ENCODE measurements at regions of chr16 and their contacts with region 1.

Region 1: DNA sequence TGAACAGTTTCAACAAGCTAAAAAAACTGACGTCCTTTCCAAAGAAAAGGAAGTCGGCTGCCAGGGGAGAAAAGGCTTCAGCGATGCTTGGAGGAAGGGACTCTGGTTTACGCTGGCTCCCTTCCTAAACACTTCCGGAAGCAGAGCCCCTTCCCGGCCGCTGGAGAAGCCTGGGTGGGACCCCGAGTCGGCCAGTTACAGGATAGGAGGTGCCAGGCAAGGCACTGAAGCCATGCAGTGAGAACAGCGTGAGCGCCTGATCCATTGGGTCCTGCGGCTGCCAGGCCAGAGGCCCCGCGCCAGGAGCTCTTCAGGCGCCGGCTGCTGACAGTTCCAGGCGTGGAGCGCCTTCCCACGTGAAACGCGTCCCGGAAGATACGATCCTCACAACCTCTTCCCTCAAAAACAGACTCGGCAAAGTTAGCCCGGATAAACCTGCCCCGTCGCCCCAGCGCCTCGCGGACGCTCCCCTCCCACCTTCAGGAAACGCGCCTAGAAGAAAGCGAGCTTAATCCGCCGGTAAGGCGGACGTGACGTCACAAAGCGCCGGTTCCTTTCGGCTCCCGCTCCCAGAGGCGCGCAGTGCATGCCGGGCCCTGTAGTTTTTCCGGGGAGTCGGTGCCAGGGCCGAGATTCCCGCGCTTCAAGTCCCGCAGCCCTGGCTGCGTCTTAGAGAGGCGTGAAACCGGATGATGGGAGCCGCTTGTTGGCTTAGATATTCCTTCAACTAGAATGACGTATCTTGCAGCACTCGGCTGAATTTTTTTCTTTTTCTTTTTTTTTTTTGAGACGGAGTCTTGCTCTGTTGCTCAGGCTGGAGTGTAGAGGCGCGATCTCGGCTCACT is at the start of gene ADAT1:
- DNase-seq: peak; percentile 96

Region 2: DNA sequence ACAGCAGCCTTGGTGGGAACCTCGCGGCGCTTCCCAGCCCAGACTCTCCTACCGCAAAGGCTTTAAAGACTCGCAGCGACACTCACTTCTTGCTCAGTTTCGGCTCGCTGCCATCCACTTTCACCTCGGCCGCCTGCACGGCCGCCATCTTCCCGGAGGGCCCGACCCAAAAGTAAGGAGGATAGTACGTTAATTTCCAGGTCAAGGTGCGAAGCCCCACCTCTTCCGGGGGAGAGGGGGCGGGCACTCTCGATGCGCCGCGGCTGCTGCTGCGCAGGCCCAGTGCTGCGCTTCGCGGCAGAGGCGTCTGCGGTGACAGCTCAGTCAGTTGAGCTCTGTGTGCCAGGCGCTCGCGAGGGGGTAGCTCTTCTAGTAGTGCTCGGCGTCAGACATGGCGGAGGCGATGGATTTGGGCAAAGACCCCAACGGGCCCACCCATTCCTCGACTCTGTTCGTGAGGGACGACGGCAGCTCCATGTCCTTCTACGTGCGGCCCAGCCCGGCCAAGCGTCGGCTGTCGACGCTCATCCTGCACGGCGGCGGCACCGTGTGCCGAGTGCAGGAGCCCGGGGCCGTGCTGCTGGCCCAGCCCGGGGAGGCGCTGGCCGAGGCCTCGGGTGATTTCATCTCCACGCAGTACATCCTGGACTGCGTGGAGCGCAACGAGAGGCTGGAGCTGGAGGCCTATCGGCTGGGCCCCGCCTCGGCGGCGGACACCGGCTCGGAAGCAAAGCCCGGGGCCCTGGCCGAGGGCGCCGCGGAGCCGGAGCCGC is 24.7 kb after region 1 on chr16 and contains the starts of genes KARS1 and TERF2IP:
- CTCF ChIA-PET with region 1: interaction called, 3 read pairs
- POLR2A ChIA-PET with region 1: interaction called, 32 read pairs
- DNase-seq: peak; percentile 93